ENCODE measurements at regions of chr18 and their contacts with region 1.

Region 1: GRCh38 chr18:62425465-62426195 is 97.2 kb upstream of the ZCCHC2 start:
- DNase-seq: peak; percentile 66
- H3K4me3 ChIP-seq: peak overlapping the region; percentile 44 to 64
- H3K27ac ChIP-seq: peak overlapping the region; percentile 51 to 85; a peak in 3 of 4 replicates
- H3K4me1 ChIP-seq: peaks cover 0 to 4% of the 10 kb centered on the region in 2 experiments; a peak in 2 of 4 replicates
- H3K27me3 ChIP-seq: no peaks in the 10 kb centered on the region
- CTCF ChIP-seq: peak; percentile 85
- EP300 ChIP-seq: peak in 1 of 2 experiments; percentile 44; a peak in 1 of 4 replicates
- RAD21 ChIP-seq: peak; percentile 88

Region 2: DNA sequence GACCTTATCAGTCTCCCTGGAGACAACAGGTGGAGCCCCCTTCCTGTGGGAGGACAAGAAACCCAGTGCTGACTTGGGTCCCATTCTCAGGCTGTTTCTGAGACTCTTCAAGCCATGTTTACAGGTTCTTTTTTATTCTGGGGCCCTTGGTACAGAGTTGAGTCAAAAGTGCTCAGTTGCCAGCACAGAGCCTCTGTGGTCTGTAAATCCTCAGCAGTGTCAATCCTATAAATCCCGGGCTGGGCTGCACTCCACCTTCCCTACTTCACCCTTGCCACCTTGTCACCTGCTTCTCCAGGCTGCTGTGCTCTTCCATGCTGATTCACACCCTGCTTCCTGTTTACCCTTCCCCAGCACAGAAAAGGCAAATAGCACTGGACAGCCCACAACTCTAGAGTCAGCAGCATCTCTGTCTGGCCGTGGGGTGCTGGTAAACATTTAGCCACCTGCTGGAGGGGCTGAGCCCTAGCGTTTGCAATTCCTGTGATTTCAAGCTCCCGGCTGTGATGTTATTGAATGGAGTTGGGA is 25.8 kb before region 1 on chr18:
- CTCF ChIA-PET with region 1: interaction called, 11 read pairs
- POLR2A ChIA-PET with region 1: no interaction called
- DNase-seq: peak; percentile 39
- H3K4me3 ChIP-seq: no peak overlapping the region
- H3K27ac ChIP-seq: no peak overlapping the region
- H3K4me1 ChIP-seq: 0 out of 4 replicates have a peak, but pooled peaks cover 0 to 2% of the 10 kb centered on the region in 2 experiments
- H3K27me3 ChIP-seq: no peaks in the 10 kb centered on the region
- CTCF ChIP-seq: peak; percentile 39
- EP300 ChIP-seq: no peak
- RAD21 ChIP-seq: no peak; the same call in 1 of the 2 replicates

Region 3: DNA sequence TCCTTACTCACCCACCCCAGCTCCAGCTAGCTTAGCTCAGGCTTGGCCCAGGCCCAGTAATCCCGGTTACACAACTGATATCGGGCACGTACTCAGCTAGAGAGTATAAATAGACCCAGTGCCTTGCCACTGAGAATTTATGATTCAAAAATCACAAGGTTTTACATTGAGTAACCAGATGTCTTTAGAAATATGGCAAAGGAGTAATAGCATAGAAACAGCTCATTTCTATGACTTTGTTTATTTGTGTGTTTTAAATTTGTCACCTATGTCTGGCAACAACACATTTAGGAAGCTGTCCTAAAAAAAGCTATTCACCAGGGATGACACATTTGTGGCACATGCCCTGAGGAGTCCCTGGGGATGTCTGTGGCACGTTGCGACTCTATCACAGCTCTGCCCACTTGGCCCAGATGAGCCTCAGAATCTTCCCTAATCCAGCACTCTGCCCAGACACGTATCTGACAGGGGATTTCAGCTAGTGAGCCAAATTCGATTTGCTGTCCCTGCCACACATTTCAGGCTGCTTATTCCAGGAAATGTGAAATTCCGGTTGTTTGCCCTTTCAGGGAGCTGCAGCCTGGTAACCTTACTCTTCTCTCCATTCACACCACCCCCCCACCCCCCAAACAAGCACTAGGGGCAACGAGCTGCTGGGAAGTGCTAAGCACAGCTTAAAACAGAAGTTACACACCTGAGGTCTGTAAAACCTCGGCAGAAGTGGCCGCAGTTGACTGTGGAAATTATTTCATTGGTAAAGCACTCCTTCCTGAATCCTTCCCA is 11.8 kb after region 1 on chr18:
- CTCF ChIA-PET with region 1: interaction called, 37 read pairs
- POLR2A ChIA-PET with region 1: no interaction called
- DNase-seq: peak; percentile 39
- H3K4me3 ChIP-seq: no peak overlapping the region
- H3K27ac ChIP-seq: peak overlapping the region in 1 of 2 experiments; percentile 53; a peak in 1 of 4 replicates
- H3K4me1 ChIP-seq: peaks cover 10 to 16% of the 10 kb centered on the region in 2 experiments; a peak in 2 of 4 replicates
- H3K27me3 ChIP-seq: no peaks in the 10 kb centered on the region
- CTCF ChIP-seq: no peak
- EP300 ChIP-seq: no peak
- RAD21 ChIP-seq: no peak

Region 4: DNA sequence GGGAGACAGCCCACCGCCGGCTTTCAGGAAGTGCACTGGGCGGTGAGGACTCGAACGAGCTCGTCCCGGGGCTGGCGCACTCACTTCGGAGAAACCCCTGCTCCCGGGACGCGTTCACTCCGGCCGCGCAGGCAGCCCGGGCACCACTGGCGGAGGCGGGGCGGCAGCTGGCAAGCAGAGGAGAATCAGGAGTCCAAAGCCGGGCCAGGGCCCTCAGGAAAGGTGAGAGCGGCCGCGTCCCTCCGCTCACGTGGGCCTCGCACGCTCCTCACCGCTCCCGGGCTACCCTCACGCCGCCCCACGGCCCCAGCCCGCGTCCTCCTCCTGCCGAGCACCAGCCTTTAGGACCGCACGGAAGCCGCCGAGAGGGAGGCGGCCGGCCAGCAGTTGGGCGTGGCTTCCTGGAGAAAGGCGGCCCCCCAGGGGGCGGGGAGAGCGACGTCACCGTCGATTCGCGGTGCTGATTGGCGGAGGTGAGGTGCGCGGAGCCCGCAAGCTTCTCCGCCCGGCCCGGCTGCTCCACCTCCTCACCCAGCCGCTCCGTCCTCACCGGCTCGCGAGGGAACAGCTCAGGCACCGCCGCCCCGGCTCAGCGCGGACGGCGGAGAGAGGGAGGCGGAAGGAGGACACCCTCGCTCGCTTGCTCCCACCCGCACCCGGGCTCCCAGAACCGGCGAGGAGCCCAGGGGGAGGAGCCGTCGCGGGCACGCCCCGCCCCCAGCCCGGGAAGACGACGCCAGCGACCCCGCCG is 97.0 kb after region 1 on chr18 and contains the start of gene ZCCHC2:
- CTCF ChIA-PET with region 1: interaction called, 10 read pairs
- POLR2A ChIA-PET with region 1: no interaction called
- DNase-seq: peak; percentile 96
- H3K4me3 ChIP-seq: peak within 1 kb of the TSS; percentile 90 to 96
- H3K27ac ChIP-seq: peak within 1 kb of the TSS; percentile 86 to 93
- H3K4me1 ChIP-seq: peaks cover 10 to 18% of the 10 kb centered on the region in 2 experiments; a peak in 3 of 4 replicates
- H3K27me3 ChIP-seq: no peaks in the 10 kb centered on the region
- CTCF ChIP-seq: no peak
- EP300 ChIP-seq: peak in 1 of 2 experiments; percentile 38; a peak in 1 of 4 replicates
- RAD21 ChIP-seq: no peak
- polyA plus RNA-seq, gene ZCCHC2: 6.7 and 7.3 TPM in 2 replicates

Region 5: GRCh38 chr18:62578980-62579511 is 153.4 kb after region 1 on chr18:
- CTCF ChIA-PET with region 1: interaction called, 10 read pairs
- POLR2A ChIA-PET with region 1: no interaction called
- DNase-seq: no peak
- H3K4me3 ChIP-seq: no peak overlapping the region
- H3K27ac ChIP-seq: no peak overlapping the region
- H3K4me1 ChIP-seq: peaks cover under 1 to 1% of the 10 kb centered on the region in 2 experiments; a peak in 2 of 4 replicates
- H3K27me3 ChIP-seq: no peaks in the 10 kb centered on the region
- CTCF ChIP-seq: no peak
- EP300 ChIP-seq: no peak
- RAD21 ChIP-seq: no peak

Region 6: GRCh38 chr18:62957885-62958472 is 532.3 kb after region 1 on chr18:
- CTCF ChIA-PET with region 1: interaction called, 10 read pairs
- POLR2A ChIA-PET with region 1: no interaction called
- DNase-seq: no peak
- H3K4me3 ChIP-seq: no peak overlapping the region
- H3K27ac ChIP-seq: no peak overlapping the region
- H3K4me1 ChIP-seq: no peaks in the 10 kb centered on the region
- H3K27me3 ChIP-seq: no peaks in the 10 kb centered on the region
- CTCF ChIP-seq: peak; percentile 73
- EP300 ChIP-seq: no peak
- RAD21 ChIP-seq: peak; percentile 58

Region 7: DNA sequence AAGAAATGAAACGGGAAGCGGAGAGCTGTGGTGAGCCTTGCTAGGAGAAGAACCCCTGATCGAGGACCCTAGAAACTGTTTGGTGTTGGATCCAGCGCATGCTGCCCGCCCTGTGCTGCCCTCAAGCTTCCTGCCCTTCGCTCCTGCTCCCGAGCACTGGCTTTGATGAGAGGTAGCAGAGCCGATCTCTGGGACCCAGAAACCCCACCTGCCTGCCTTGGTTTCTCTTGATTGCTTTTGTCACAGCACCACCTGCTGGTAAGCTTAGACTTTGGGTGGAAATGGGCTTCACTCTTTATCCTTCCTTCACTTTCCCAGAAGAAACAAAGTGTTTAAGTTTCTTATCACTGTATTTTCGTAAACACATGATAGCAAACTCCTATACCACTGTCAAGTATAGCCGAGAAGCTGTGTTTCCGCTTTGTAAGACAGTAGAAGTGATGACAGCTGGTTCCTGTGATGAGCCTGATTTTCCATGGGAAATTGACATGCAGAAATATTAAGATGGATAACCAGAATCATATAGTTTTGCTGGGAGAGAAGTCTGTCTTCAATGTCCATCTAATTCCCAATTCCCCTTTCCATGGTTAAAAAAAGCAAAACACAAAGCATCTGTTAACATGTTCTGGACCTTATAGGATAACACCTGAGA is 557.1 kb after region 1 on chr18:
- CTCF ChIA-PET with region 1: interaction called, 15 read pairs
- POLR2A ChIA-PET with region 1: no interaction called
- DNase-seq: peak; percentile 81
- H3K4me3 ChIP-seq: peak overlapping the region in 1 of 2 experiments; percentile 11; a peak in 1 of 4 replicates
- H3K27ac ChIP-seq: no peak overlapping the region
- H3K4me1 ChIP-seq: peaks cover 0 to 3% of the 10 kb centered on the region in 2 experiments; a peak in 1 of 4 replicates
- H3K27me3 ChIP-seq: no peaks in the 10 kb centered on the region
- CTCF ChIP-seq: peak; percentile 87
- EP300 ChIP-seq: no peak
- RAD21 ChIP-seq: peak; percentile 91

Measured in SK-N-SH (cell line).